ENCODE measurements at regions of chr2 and their contacts with region 1.

Region 1: GRCh38 chr2:39227628-39228412 is 15.9 kb downstream of the CDKL4 start:
- DNase-seq: peak; percentile 90
- ATAC-seq: peak; percentile 88
- H3K4me3 Mint-ChIP-seq: peak overlapping the region; percentile 74
- H3K27ac Mint-ChIP-seq: peak overlapping the region; percentile 98
- H3K4me1 Mint-ChIP-seq: peaks cover 54% of the 10 kb centered on the region
- H3K27me3 Mint-ChIP-seq: no peaks in the 10 kb centered on the region

Region 2: GRCh38 chr2:39059366-39059952 is 168.4 kb before region 1 on chr2:
- CTCF ChIA-PET with region 1: interaction called, 145 read pairs
- DNase-seq: no peak
- ATAC-seq: no peak
- H3K4me3 Mint-ChIP-seq: no peak overlapping the region
- H3K27ac Mint-ChIP-seq: peak overlapping the region; percentile 34
- H3K4me1 Mint-ChIP-seq: peaks cover 26% of the 10 kb centered on the region
- H3K27me3 Mint-ChIP-seq: no peaks in the 10 kb centered on the region

Region 3: DNA sequence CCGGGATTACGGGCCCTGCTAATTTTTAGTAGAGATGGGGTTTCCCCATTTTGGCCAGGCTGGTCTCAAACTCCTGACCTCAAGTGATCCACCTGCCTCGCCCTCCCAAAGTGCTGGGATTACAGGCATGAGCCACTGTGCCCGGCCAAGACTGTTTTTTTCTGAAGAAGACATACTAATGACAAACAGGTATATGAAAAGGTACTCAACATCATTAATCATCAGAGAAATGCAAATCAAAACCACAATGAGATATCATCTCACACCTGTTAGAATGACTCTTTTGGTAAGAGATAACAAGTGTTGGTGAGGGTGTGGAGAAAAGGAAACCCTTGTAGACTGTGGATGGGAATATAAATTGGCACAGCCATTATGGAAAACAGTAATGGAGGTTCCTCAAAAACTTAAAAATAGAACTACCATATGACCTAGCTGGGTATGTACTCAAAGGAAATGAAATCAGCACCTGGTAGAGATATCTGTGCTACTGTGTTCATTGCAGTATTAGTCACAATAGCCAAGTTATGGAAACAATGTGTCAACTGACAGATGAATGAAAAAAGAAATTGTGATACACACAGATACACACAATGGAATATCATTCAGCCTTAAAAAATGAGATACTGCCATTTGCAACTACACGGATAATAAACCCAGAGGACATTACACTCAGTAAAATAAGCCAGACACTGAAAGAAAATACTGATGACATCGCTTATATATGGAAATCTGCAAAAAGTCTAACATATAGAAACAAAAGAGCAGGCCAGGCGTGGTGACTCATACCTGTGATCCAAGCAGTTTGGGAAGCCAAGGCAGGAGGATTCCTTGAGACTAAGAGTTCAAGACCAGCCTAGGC is 127.7 kb before region 1 on chr2:
- CTCF ChIA-PET with region 1: interaction called, 10 read pairs
- DNase-seq: no peak
- ATAC-seq: peak; percentile 88
- H3K4me3 Mint-ChIP-seq: no peak overlapping the region
- H3K27ac Mint-ChIP-seq: peak overlapping the region; percentile 77
- H3K4me1 Mint-ChIP-seq: peaks cover 65% of the 10 kb centered on the region
- H3K27me3 Mint-ChIP-seq: no peaks in the 10 kb centered on the region

Region 4: GRCh38 chr2:39124000-39124745 is 103.6 kb before region 1 on chr2:
- CTCF ChIA-PET with region 1: interaction called, 183 read pairs
- DNase-seq: peak; percentile 99
- ATAC-seq: peak; percentile 77
- H3K4me3 Mint-ChIP-seq: peak overlapping the region; percentile 90
- H3K27ac Mint-ChIP-seq: peak overlapping the region; percentile 91
- H3K4me1 Mint-ChIP-seq: peaks cover 59% of the 10 kb centered on the region
- H3K27me3 Mint-ChIP-seq: no peaks in the 10 kb centered on the region

Region 5: GRCh38 chr2:39210846-39211245 is 17.0 kb before region 1 on chr2:
- CTCF ChIA-PET with region 1: interaction called, 19 read pairs
- DNase-seq: no peak
- ATAC-seq: no peak
- H3K4me3 Mint-ChIP-seq: no peak overlapping the region
- H3K27ac Mint-ChIP-seq: peak overlapping the region; percentile 71
- H3K4me1 Mint-ChIP-seq: peaks cover 51% of the 10 kb centered on the region
- H3K27me3 Mint-ChIP-seq: no peaks in the 10 kb centered on the region